ENCODE measurements at regions of chr13 and their contacts with region 1.

Region 1: GRCh38 chr13:110819203-110820014 is 95.5 kb downstream of the ANKRD10 start:
- DNase-seq: peak; percentile 58
- ATAC-seq: peak; percentile 99
- H3K4me3 ChIP-seq: no peak overlapping the region
- H3K27ac ChIP-seq: no peak overlapping the region
- H3K4me1 ChIP-seq: peaks cover 2% of the 10 kb centered on the region; the same call in 1 of the 2 replicates
- H3K27me3 ChIP-seq: peaks cover 2% of the 10 kb centered on the region; the same call in 1 of the 2 replicates
- CTCF ChIP-seq: peak; percentile 94
- POLR2A ChIP-seq: peak; percentile 28; the same call in 1 of the 2 replicates
- RAD21 ChIP-seq: peak; percentile 95

Region 2: GRCh38 chr13:110593430-110594130 is 225.8 kb before region 1 on chr13:
- CTCF ChIA-PET with region 1: no interaction called
- POLR2A ChIA-PET with region 1: no interaction called
- dilution Hi-C with region 1: no loop called
- in situ Hi-C with region 1: loop called (anchors 25 kb)
- intact Hi-C with region 1: loop called (anchors 1 kb)
- DNase-seq: peak; percentile 57
- ATAC-seq: peak; percentile 81
- H3K4me3 ChIP-seq: no peak overlapping the region
- H3K27ac ChIP-seq: no peak overlapping the region
- H3K4me1 ChIP-seq: 0 out of 2 replicates have a peak, but pooled peaks cover 4% of the 10 kb centered on the region
- H3K27me3 ChIP-seq: peaks cover 2% of the 10 kb centered on the region; the same call in 1 of the 2 replicates
- CTCF ChIP-seq: peak; percentile 61
- POLR2A ChIP-seq: no peak
- RAD21 ChIP-seq: peak; percentile 66

Region 3: DNA sequence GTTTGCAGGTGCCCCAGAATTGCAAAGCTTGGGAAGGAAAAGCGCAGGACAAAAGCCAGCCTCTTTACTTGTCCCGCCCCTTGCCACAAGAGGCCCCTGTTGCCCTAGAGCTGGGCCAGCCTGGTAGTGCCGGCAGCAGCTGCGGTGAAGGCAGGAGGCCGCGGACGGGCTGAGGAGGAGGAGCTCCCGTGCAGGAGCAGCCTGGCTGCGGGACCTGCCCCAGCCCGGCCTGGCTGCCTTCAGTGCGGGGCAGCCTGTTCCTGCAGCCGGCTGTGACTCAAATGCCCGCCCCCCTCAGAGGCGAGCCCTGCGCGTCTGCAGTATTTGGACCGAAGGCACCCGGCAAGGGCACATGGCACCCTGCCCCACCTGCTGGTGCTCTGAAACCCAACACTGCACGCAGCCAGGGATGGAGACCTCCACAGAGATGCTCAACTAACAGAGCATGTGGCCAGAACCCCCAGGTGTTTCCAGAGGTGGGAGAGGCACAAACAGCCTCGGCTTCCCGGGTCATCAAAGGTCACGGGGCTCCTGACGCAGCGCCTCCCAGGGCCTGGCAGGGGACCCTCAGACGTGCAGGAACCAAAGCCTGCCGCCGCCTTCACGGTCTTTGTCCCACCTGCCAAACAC is 174.4 kb before region 1 on chr13:
- CTCF ChIA-PET with region 1: interaction called, 6 read pairs
- POLR2A ChIA-PET with region 1: no interaction called
- dilution Hi-C with region 1: no loop called
- in situ Hi-C with region 1: no loop called
- intact Hi-C with region 1: loop called (anchors 1 kb)
- DNase-seq: peak; percentile 55
- ATAC-seq: peak; percentile 82
- H3K4me3 ChIP-seq: no peak overlapping the region
- H3K27ac ChIP-seq: no peak overlapping the region
- H3K4me1 ChIP-seq: peaks cover 8% of the 10 kb centered on the region; the same call in 1 of the 2 replicates
- H3K27me3 ChIP-seq: no peaks in the 10 kb centered on the region
- CTCF ChIP-seq: peak; percentile 36
- POLR2A ChIP-seq: no peak
- RAD21 ChIP-seq: peak; percentile 36; the same call in 1 of the 2 replicates

Region 4: DNA sequence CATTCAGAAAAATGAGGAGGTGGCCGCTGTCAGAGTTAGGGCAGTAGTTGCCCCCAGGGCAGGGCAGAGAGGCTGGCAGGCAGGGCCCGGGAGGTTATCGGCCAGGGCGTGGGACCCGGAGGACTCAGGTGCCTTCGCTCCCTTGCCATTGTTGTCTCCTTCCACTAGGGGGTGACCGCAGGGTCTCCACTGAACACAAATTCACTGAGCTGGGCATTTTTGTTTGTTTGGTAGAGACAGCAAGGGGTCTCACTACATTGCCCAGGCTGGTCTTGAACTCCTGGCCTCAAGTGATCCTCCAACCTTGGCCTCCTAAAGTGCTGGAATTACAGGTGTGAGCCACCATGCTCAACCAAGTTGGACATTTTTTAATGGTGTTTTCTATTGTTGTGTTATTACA is 138.6 kb before region 1 on chr13:
- CTCF ChIA-PET with region 1: no interaction called
- POLR2A ChIA-PET with region 1: no interaction called
- dilution Hi-C with region 1: no loop called
- in situ Hi-C with region 1: no loop called
- intact Hi-C with region 1: loop called (anchors 1 kb)
- DNase-seq: no peak
- ATAC-seq: peak; percentile 54; the same call in 1 of the 2 replicates
- H3K4me3 ChIP-seq: no peak overlapping the region
- H3K27ac ChIP-seq: no peak overlapping the region
- H3K4me1 ChIP-seq: peaks cover 3% of the 10 kb centered on the region; the same call in 1 of the 2 replicates
- H3K27me3 ChIP-seq: no peaks in the 10 kb centered on the region
- CTCF ChIP-seq: peak; percentile 38
- POLR2A ChIP-seq: no peak
- RAD21 ChIP-seq: peak; percentile 37